ENCODE measurements at regions of chr3 and their contacts with region 1.

Region 1: DNA sequence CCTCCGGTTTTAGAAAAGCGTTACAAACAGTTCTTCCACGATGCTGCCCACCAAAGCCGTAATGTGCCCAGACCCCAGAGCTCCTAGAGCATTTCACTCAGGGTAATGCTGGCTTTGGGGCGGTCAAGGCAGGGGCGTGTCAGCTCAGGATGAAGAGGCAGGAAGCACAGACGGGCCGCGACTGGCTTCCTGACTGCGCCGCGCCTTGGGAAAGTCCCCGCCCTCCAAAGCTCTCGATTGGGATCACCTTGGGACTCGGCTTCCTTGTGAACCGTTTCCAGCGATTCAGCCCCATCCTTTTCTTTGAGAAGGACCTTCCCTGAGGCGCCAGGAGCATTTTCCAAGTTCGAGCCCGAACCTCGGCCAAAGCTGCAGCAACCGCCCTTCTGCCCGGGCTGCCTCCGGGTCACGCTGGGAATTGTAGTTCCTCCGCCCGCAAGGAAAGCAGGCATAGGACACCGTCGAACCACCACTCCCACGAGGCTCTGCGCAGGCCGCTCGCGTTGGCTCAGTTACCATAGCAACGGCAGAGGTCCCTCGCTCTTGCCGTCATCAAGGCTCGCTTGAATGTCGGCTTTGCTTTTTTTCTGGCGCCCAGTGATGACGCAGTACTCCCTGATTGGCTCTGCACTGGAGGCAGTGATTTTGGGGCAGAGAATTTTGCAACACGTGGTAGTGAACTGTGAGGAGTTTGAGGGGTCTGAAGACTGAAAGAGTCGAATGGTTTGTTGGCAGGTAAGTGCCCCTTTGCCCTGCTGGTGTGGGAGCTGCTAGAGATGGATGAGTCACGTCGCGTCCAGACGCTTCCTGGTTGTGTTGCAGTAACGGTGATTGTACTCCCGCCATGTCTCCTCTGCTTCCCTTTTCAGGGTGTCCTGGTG is at the starts of genes CCDC191 and QTRT2:
- DNase-seq: peak; percentile 96 to 100
- H3K4me3 ChIP-seq: peak within 1 kb of the TSS; percentile 73 to 80
- H3K27ac ChIP-seq: peak within 1 kb of the TSS; percentile 61 to 68
- H3K4me1 ChIP-seq: peaks cover 8% of the 10 kb centered on the region in 2 donors
- H3K27me3 ChIP-seq: no peaks in the 10 kb centered on the region
- CTCF ChIP-seq: no peak
- total RNA-seq, gene CCDC191: 0.21 TPM
- total RNA-seq, gene QTRT2: 9.5 TPM

Region 2: DNA sequence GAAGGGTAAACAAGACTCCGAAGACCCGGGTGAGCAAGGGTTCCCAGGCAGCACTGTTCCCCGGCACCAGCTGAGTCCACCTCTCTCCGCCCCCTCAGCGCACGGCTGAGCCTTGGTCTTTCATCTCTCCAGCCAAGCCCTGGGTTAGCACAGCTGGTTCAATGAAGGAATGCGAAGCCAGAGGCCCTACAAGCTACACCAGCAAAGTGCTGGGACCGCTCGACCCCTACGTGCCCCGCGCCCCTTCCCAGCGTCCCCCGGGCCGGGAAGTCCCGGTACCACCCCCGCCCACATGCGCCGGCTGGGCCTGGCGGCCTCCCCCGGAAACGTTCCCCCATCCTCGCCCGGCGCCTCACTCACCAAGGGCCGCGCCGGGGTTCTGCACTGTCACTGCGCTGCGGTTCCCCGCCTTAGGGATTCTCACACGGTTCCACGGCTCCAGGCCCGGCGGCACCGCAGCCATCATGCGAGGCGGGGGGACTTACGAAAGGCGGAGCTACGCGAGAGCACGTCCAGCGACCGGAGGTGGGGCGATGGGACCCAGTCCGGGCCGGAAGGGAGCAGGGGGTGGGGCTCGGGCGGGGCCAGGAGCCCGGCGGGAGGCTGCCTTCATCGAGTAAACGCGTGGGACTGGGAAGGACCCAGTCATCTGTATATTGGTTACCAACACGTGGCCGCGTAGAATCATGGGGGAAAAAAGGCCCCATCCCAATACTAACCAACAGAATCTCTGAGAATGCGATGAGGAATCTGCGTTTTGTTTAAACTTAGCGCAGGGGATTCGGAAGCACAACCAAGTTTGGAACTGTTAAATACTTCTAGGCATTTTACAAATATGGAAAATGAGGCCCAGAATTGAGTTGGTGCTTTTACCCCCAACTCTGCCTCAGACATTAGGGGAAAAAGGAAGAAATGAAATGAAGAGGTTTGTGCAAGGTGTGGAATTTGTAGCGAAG is 1036.9 kb before region 1 on chr3:
- intact Hi-C with region 1: loop called (anchors 2 kb)
- DNase-seq: peak; percentile 51 to 95
- H3K4me3 ChIP-seq: peak overlapping the region; percentile 75 to 76
- H3K27ac ChIP-seq: peak overlapping the region; percentile 93 to 95
- H3K4me1 ChIP-seq: peaks cover 9 to 13% of the 10 kb centered on the region in 2 donors
- H3K27me3 ChIP-seq: no peaks in the 10 kb centered on the region
- CTCF ChIP-seq: no peak

Region 3: GRCh38 chr3:113696658-113697499 is 359.5 kb before region 1 on chr3:
- intact Hi-C with region 1: loop called (anchors 1 kb)
- DNase-seq: peak; percentile 98 to 100
- H3K4me3 ChIP-seq: peak overlapping the region; percentile 93 to 98
- H3K27ac ChIP-seq: peak overlapping the region; percentile 98 to 99
- H3K4me1 ChIP-seq: peaks cover 0 to 17% of the 10 kb centered on the region in 2 donors
- H3K27me3 ChIP-seq: no peaks in the 10 kb centered on the region
- CTCF ChIP-seq: peak in 1 of 3 experiments; percentile 22

Region 4: GRCh38 chr3:113927556-113927955 is 128.8 kb before region 1 on chr3:
- intact Hi-C with region 1: no loop called
- DNase-seq: no peak
- H3K4me3 ChIP-seq: no peak overlapping the region
- H3K27ac ChIP-seq: no peak overlapping the region
- H3K4me1 ChIP-seq: no peaks in the 10 kb centered on the region
- H3K27me3 ChIP-seq: no peaks in the 10 kb centered on the region
- CTCF ChIP-seq: no peak

Region 5: DNA sequence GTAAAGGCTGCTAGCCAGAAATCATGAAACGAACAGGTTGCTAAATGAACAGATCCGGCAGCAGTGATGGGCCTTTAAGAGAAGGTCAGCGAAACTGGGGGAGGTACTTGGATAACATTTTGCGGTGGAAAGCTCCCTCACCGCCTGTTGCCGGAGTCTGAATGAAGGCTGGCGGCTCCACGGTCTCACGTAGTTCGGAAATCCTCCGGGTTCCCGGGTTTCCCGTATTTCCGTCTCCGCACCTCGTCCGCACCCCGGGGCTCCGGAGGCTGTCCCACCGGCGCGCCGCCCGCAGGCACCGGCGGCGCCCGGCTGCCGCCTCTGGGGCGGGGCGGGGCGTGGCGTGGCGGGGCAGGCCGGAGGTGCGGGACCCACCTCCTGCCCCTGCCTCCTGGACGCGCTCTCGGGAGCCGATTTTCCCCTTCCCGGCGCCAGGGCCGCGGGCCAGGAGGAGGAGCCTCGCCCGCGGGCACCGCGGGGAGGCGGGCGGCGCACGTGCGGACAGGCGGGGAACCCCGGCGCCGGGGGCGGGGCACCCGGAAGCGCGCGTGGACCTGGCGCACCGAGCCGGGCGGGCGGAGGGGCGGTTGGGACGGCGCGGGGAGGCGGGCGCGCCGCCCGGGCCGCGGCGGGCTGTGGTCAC is 108.9 kb before region 1 on chr3 and contains the start of gene ZDHHC23:
- intact Hi-C with region 1: loop called (anchors 1 kb)
- DNase-seq: peak in 1 of 2 donors; percentile 85
- H3K4me3 ChIP-seq: peak within 1 kb of the TSS; percentile 70 to 82
- H3K27ac ChIP-seq: peak within 1 kb of the TSS; percentile 60 to 68
- H3K4me1 ChIP-seq: no peaks in the 10 kb centered on the region
- H3K27me3 ChIP-seq: no peaks in the 10 kb centered on the region
- CTCF ChIP-seq: no peak
- total RNA-seq, gene ZDHHC23: 4.4 TPM